ENCODE measurements at regions of chr1 and their contacts with region 1.

Region 1: GRCh38 chr1:220733090-220733601 is 15.0 kb upstream of the MTARC2 start:
- DNase-seq: peak; percentile 71 to 74
- H3K4me3 ChIP-seq: no peak overlapping the region
- H3K27ac ChIP-seq: no peak overlapping the region
- H3K4me1 ChIP-seq: peaks cover 20% of the 10 kb centered on the region
- H3K27me3 ChIP-seq: no peaks in the 10 kb centered on the region
- CTCF ChIP-seq: peak; percentile 89

Region 2: GRCh38 chr1:219527994-219528393 is 1205.2 kb before region 1 on chr1:
- CTCF ChIA-PET with region 1: no interaction called
- POLR2A ChIA-PET with region 1: interaction called, 13 read pairs
- intact Hi-C with region 1: no loop called
- DNase-seq: no peak
- H3K4me3 ChIP-seq: no peak overlapping the region
- H3K27ac ChIP-seq: no peak overlapping the region
- H3K4me1 ChIP-seq: no peaks in the 10 kb centered on the region
- H3K27me3 ChIP-seq: no peaks in the 10 kb centered on the region
- CTCF ChIP-seq: no peak

Region 3: DNA sequence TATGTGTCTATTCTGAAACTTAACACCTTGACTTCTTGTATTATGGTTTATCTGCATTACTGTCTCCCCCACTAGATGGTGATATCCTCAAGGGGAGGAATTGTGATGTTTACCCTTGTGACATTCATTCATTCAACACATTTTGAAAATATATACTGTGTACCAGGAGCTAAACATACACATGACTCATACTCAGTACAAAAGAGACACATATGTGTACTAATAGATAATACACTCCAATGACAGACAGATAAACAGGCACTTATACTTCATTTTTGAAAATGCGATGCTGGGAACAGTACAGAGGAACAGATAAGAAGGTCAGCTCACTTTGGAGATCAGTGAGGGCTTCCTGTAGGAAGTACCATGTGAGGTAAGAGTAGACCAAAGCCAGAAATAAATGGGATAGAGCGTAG is 452.0 kb before region 1 on chr1:
- CTCF ChIA-PET with region 1: interaction called, 4 read pairs
- POLR2A ChIA-PET with region 1: no interaction called
- intact Hi-C with region 1: loop called (anchors 2 kb)
- DNase-seq: peak in 1 of 2 experiments; percentile 64
- H3K4me3 ChIP-seq: no peak overlapping the region
- H3K27ac ChIP-seq: no peak overlapping the region
- H3K4me1 ChIP-seq: no peaks in the 10 kb centered on the region
- H3K27me3 ChIP-seq: no peaks in the 10 kb centered on the region
- CTCF ChIP-seq: peak; percentile 84

Region 4: DNA sequence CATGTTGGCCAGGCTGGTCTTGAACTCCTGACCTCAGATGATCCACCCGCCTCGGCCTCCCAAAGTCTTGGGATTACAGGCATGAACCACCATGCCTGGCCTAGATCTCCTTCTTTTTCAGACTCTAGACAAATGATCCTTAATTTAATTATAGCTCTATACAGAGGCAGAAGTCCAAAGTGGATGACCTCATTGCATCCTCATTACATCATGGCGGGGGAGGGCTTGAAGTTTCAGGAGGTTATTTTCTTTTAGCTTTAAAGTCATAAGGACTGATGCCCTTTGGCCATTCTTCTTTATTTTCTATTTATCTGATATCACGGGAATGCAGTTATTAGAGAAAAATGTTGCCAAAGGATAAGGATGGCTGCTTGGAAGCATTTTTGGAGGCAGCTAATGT is 219.3 kb before region 1 on chr1:
- CTCF ChIA-PET with region 1: interaction called, 14 read pairs
- POLR2A ChIA-PET with region 1: no interaction called
- intact Hi-C with region 1: no loop called
- DNase-seq: no peak
- H3K4me3 ChIP-seq: no peak overlapping the region
- H3K27ac ChIP-seq: no peak overlapping the region
- H3K4me1 ChIP-seq: peaks cover 11% of the 10 kb centered on the region
- H3K27me3 ChIP-seq: no peaks in the 10 kb centered on the region
- CTCF ChIP-seq: no peak

Region 5: DNA sequence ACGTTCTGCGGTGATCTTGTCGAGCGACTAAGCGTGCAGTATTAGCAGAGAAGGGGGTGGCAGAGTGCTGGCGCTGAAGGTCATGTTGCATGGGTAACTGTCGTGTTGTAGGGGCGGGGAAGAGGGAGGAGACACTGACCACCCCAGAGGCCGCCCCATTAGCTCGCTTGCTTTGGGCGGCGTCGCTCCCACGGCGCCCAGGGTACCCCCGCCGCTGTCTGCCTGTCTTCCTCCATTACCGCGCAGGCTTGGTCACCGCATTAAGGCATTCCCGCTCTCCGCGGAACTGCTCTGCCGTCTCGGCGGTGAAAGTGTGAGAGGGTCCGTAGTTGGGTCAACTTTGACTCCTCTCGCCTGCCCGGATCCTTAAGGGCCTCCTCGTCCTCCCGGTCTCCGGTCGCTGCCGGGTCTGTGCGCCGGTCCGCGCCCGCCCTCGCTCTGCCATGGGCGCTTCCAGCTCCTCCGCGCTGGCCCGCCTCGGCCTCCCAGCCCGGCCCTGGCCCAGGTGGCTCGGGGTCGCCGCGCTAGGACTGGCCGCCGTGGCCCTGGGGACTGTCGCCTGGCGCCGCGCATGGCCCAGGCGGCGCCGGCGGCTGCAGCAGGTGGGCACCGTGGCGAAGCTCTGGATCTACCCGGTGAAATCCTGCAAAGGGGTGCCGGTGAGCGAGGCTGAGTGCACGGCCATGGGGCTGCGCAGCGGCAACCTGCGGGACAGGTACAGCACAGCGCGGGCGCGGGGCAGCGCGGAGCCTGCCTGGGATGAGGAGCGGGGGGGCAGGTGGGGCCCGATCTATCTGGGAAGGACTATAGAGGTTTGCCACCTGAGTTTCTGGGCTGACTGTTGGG is 15.2 kb after region 1 on chr1 and contains the start of gene MTARC2:
- CTCF ChIA-PET with region 1: interaction called, 15 read pairs
- POLR2A ChIA-PET with region 1: interaction called, 10 read pairs
- intact Hi-C with region 1: loop called (anchors 2 kb)
- DNase-seq: peak; percentile 79 to 88
- H3K4me3 ChIP-seq: peak within 1 kb of the TSS; percentile 74
- H3K27ac ChIP-seq: 0 out of 2 replicates have a peak within 1 kb of the TSS, but pooled peaks have one; percentile 33
- H3K4me1 ChIP-seq: peaks cover 24% of the 10 kb centered on the region
- H3K27me3 ChIP-seq: no peaks in the 10 kb centered on the region
- CTCF ChIP-seq: no peak
- total RNA-seq, gene MTARC2: 23.1 and 32.2 TPM in 2 replicates

Region 6: DNA sequence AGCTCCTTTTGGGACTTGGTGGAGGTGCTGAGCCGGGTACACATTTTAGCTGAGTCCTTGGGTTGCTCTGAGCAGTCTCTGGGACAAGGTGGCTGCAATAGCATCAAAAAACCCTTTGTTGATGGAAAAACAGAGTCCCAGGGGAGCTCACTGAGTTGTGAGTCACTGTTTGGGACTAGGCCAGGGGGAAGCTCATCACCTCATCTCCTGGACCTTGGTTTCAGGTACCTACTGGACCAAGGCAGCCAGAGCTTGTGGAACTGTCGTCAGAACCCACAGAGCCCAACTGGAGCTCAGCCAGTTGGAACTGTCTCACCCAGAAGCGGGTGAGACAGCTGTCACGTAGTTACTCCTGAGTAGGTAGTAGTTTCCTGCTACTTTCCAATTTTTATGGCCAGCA is 292.8 kb after region 1 on chr1:
- CTCF ChIA-PET with region 1: no interaction called
- POLR2A ChIA-PET with region 1: no interaction called
- intact Hi-C with region 1: no loop called
- DNase-seq: no peak
- H3K4me3 ChIP-seq: no peak overlapping the region
- H3K27ac ChIP-seq: no peak overlapping the region
- H3K4me1 ChIP-seq: no peaks in the 10 kb centered on the region
- H3K27me3 ChIP-seq: no peaks in the 10 kb centered on the region
- CTCF ChIP-seq: no peak

Region 7: GRCh38 chr1:221431068-221431651 is 698.0 kb after region 1 on chr1:
- CTCF ChIA-PET with region 1: no interaction called
- POLR2A ChIA-PET with region 1: no interaction called
- intact Hi-C with region 1: no loop called
- DNase-seq: no peak
- H3K4me3 ChIP-seq: no peak overlapping the region
- H3K27ac ChIP-seq: no peak overlapping the region
- H3K4me1 ChIP-seq: peaks cover 9% of the 10 kb centered on the region
- H3K27me3 ChIP-seq: no peaks in the 10 kb centered on the region
- CTCF ChIP-seq: no peak